Activated T-helper 2 cell treated with anti-CD3 and anti-CD28 coated beads, Interferon-gamma antibody, Interleukin-2, Interleukin-4, amounts not matched to agents 10 μg/mL and 5 μg/mL and 100 μg/mL, durations not matched to agents 14 hours and 24 hours and 36 hours (primary cell): ENCODE measurements at regions of chr4 and their contacts with region 1.

Region 1: DNA sequence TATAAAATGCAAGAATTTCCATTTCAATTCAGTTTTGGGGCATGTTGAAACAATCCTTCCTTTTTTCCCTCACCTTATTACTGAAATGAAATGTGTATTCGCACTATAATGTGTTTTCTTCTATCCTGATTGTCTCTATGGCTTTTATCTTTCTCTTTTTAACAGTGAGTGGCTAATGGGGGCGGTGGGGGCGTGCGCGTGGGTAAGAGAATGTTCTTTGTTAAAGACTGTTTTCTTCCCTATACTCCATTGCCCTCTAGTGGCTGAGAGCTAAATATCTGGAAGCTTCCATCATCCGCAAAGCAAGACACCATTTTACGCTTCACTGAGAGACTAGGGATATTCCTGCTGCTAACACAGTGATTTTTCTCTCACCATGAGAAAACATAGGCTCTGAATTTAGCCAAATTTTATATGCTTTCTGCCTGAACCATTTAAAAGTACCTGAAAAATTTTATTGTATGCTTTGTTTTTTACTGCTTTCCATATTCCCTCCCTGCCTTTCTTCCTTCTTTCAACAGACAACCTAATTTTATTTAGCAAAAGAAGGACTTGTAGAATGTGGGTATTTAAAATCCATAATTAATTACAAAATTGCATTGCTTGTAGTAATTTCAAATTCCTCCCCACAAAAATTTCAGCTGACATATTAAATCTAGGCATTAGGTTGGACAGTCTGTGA is 194.0 kb downstream of the GASK1B start:
- DNase-seq: no peak
- H3K4me3 Mint-ChIP-seq: no peak overlapping the region
- H3K27ac Mint-ChIP-seq: no peak overlapping the region
- H3K4me1 Mint-ChIP-seq: peaks cover 3% of the 10 kb centered on the region
- H3K27me3 Mint-ChIP-seq: peaks cover 3% of the 10 kb centered on the region

Region 2: GRCh38 chr4:157217708-157218107 is 761.1 kb before region 1 on chr4:
- intact Hi-C with region 1: loop called (anchors 2 kb)
- DNase-seq: no peak
- H3K4me3 Mint-ChIP-seq: no peak overlapping the region
- H3K27ac Mint-ChIP-seq: no peak overlapping the region
- H3K4me1 Mint-ChIP-seq: no peaks in the 10 kb centered on the region
- H3K27me3 Mint-ChIP-seq: peaks cover 16% of the 10 kb centered on the region

Region 3: DNA sequence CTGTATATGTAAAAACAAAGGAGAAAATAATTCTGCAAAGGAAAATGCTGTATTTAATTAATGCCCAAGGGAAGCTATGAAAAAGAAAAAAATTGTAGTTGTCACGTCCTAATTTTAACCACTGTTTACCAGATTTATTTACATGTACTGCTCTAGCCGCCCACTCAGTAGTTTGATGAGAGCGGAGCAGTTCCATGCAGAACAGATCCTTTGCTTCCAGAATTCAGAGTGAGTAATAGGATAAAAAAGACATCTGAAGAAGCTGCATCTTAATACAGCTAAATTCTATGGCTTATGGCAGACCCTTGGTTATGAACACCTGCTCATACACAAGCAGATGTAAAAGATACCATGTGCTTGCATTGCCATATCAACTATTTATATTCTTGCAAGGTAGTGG is 93.0 kb before region 1 on chr4:
- intact Hi-C with region 1: no loop called
- DNase-seq: no peak
- H3K4me3 Mint-ChIP-seq: no peak overlapping the region
- H3K27ac Mint-ChIP-seq: no peak overlapping the region
- H3K4me1 Mint-ChIP-seq: no peaks in the 10 kb centered on the region
- H3K27me3 Mint-ChIP-seq: no peaks in the 10 kb centered on the region

Region 4: GRCh38 chr4:158201322-158201721 is 222.5 kb after region 1 on chr4:
- intact Hi-C with region 1: no loop called
- DNase-seq: no peak
- H3K4me3 Mint-ChIP-seq: no peak overlapping the region
- H3K27ac Mint-ChIP-seq: no peak overlapping the region
- H3K4me1 Mint-ChIP-seq: no peaks in the 10 kb centered on the region
- H3K27me3 Mint-ChIP-seq: peaks cover 3% of the 10 kb centered on the region